Right ventricle myocardium superior (tissue), 1 donor: ENCODE measurements at regions of chr1 and their contacts with region 1.

Region 1: GRCh38 chr1:211698161-211699026 is 23.0 kb upstream of the NEK2 start:
- DNase-seq: peak; percentile 89
- ATAC-seq: peak; percentile 97

Region 2: GRCh38 chr1:211675230-211676105 is 22.9 kb before region 1 on chr1 and contains the start of gene NEK2:
- intact Hi-C with region 1: no loop called
- DNase-seq: peak; percentile 95
- ATAC-seq: peak; percentile 99
- total RNA-seq, gene NEK2: not detected

Region 3: DNA sequence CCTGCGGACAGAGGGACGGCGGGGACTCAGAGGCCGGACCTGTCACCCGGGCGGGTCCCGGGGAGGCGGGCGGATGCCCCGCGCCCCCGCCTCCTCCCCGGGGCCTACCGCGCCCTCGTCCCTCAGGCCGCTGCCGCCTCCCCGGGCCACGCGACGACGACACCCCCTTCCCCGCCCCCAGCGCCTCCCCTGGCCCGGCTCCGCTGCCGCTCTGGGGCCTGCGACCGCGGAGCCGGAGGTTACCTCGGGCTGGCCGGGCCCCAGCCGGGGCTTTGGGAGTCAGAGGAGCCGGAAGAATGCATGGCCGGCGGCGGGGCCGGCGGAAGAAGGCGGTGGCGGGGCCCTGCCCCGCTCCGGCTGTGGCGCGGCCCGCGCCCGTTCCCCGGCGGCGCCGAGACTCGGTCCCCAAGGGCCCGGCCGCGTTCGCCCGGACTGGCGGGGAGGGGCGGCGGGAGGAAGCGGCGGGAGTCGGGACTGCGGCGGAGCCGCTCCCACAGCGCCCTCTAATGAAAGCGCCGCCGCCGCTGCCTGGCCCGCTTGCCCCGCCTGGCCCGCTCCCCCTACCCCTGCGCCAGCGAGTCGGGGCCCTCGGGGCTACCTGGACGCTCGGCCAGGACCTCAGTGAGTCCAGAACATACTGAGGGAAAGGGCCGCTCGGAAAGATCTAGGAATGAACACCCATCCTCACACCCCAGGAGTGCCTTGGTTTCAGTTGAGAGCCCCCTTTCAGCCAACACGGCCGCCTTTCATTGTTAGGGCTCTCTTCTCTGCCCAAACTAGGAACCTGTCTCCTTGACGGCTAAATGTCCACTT is 132.1 kb after region 1 on chr1 and contains the start of gene LPGAT1:
- intact Hi-C with region 1: loop called (anchors 2 kb)
- DNase-seq: peak; percentile 89
- ATAC-seq: peak; percentile 98
- total RNA-seq, gene LPGAT1: 21.4 TPM

Region 4: DNA sequence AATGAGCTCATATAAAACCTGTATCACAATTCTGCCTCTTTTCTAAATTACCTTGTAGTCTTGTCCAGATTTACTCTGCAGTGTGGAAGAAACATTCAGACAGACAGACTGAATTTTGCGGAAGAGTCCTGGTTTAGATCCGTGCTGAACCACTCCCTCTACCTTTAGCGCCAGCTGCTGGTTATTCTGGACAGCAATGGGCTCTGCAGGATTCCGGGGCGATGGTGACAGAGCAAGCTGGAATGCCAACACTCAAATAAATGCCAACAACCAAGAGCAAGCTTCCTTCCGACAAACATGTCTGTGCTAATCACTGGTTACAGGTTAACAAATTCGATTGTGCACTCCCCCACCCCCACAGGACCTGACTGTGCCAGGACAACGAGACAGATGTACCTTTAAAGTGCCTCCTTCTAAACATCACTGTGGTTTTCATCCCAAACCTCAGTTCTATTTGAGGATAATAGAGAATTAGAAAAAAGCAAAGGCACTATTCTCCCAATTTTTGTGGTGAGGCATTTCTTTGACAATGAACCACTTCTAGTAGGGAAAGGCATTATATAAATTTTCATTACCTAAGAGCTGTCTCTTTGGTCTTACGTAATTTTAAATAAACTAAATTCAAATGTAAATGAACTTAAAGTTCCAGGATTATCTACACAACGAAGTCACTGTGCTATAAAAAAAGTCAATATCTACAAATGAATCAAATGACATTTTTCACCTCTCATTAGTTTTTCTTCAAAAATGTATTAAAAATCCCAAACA is 246.5 kb after region 1 on chr1:
- intact Hi-C with region 1: loop called (anchors 10 kb)
- DNase-seq: no peak
- ATAC-seq: peak; percentile 92